H1 (cell line): ENCODE measurements at regions of chr22 and their contacts with region 1.

Region 1: GRCh38 chr22:29071261-29072045 is 1.4 kb upstream of the KREMEN1 start:
- DNase-seq: peak; percentile 43 to 78
- H3K4me3 ChIP-seq: peak overlapping the region; percentile 17 to 61 (median 28); a peak in 7 of 8 replicates
- H3K27ac ChIP-seq: no peak overlapping the region
- H3K4me1 ChIP-seq: peaks cover 3 to 9% (median 7%) of the 10 kb centered on the region in 4 experiments
- H3K27me3 ChIP-seq: peaks cover 9 to 51% (median 48%) of the 10 kb centered on the region in 4 experiments
- CTCF ChIP-seq: no peak
- EP300 ChIP-seq: no peak
- POLR2A ChIP-seq: no peak
- RAD21 ChIP-seq: no peak; a peak in 1 of 4 replicates

Region 2: DNA sequence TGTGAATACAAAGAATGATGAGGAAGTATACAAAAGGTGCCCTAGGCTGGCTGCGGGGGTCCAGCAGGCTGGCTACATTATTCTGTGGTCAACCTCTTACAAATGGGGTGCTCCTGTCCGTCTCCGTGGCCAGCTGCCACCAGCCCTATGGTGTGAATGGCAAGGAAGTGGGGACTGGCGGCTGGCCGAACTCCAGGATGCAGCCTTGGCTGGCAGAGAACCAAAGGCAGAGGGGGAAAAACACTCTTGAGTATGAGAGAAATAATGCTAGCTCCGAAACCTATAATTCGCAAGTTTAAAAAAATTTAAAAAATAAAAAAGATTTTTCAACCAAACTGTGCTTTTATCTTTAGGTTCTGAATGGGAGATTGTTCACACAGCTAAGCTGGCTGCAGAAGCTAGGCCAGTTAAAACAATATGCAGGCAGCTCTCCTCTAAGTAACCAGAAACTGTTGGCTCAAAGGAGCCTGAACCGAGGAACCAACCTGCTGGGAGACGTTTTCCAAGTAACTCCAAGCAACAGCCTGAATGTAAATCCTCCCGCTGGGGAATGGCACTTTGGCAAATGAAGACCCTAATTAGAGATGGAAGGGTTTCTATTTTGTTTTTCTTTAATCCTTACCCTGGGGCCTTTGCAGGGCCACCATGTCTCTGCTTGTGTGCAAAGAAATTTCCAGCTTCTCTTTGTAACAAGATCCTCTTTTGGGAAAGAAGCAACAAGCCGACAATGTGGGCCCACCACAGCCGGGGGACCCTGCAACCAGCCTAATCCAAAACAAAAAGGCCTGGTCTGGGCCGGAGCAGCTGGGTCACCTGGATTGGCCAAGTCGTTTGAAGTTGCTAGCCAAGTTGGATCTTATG is 60.0 kb before region 1 on chr22:
- CTCF ChIA-PET with region 1: no interaction called
- POLR2A ChIA-PET with region 1: no interaction called
- DNase-seq: no peak
- H3K4me3 ChIP-seq: no peak overlapping the region
- H3K27ac ChIP-seq: no peak overlapping the region
- H3K4me1 ChIP-seq: peaks cover 5 to 27% (median 10%) of the 10 kb centered on the region in 4 experiments; a peak in 5 of 7 replicates
- H3K27me3 ChIP-seq: no peaks in the 10 kb centered on the region; a peak in 1 of 7 replicates
- CTCF ChIP-seq: no peak
- EP300 ChIP-seq: no peak
- POLR2A ChIP-seq: no peak
- RAD21 ChIP-seq: no peak

Region 3: DNA sequence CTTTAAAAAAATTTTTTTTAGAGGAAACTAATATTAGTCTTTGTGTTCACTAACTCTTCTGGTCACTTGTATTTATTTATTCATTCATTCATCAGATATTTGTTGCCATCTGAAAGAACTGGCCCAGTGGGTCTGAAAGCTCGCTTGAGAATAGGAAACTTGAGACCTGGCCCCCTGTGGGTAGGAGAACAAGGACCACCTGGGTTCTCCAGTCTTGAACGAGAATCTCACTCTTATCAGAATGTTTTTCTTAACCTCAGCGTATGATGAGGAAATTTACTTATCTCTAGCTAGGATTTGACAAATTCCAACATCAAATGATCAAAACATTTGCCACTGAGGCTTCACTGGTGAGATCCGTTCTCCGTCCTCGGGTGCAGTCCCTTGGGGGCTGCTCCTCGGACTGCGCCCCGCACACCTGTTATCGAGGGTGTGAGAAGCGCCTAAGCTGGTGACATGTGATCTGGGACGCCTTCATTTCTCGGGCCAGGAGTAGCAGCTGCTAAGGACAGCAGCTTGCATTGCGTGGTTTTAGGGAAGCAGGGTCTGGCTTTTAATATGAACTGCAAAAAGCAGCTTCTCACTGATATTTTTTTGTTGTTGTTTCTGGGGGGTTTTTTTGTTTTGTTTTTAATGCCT is 16.1 kb before region 1 on chr22:
- CTCF ChIA-PET with region 1: interaction called, 4 read pairs
- POLR2A ChIA-PET with region 1: interaction called, 12 read pairs
- DNase-seq: no peak
- H3K4me3 ChIP-seq: peak overlapping the region in 3 of 4 experiments; percentile 20 to 38 (median 34); a peak in 4 of 8 replicates
- H3K27ac ChIP-seq: no peak overlapping the region
- H3K4me1 ChIP-seq: peaks cover 0 to 27% (median 18%) of the 10 kb centered on the region in 4 experiments; a peak in 6 of 7 replicates
- H3K27me3 ChIP-seq: no peaks in the 10 kb centered on the region
- CTCF ChIP-seq: no peak
- EP300 ChIP-seq: no peak
- POLR2A ChIP-seq: no peak
- RAD21 ChIP-seq: no peak